ENCODE measurements at regions of chr2 and their contacts with region 1.

Region 1: GRCh38 chr2:176454893-176455811 is 185.9 kb downstream of the MTX2 start:
- DNase-seq: peak; percentile 67 to 98
- H3K4me3 ChIP-seq: no peak overlapping the region
- H3K27ac ChIP-seq: no peak overlapping the region
- H3K4me1 ChIP-seq: peaks cover 0 to 14% (median 7%) of the 10 kb centered on the region in 4 experiments; a peak in 5 of 7 replicates
- H3K27me3 ChIP-seq: no peaks in the 10 kb centered on the region
- CTCF ChIP-seq: peak; percentile 57 to 82 (median 79)
- EP300 ChIP-seq: no peak
- POLR2A ChIP-seq: no peak
- RAD21 ChIP-seq: peak; percentile 91 to 94

Region 2: GRCh38 chr2:176167398-176167797 is 287.8 kb before region 1 on chr2:
- CTCF ChIA-PET with region 1: interaction called, 11 read pairs
- POLR2A ChIA-PET with region 1: no interaction called
- DNase-seq: no peak
- H3K4me3 ChIP-seq: no peak overlapping the region
- H3K27ac ChIP-seq: no peak overlapping the region
- H3K4me1 ChIP-seq: peaks cover 0 to 15% (median 9%) of the 10 kb centered on the region in 4 experiments; a peak in 5 of 7 replicates
- H3K27me3 ChIP-seq: peaks cover 96 to 100% (median 100%) of the 10 kb centered on the region in 4 experiments
- CTCF ChIP-seq: no peak
- EP300 ChIP-seq: no peak
- POLR2A ChIP-seq: no peak
- RAD21 ChIP-seq: no peak

Region 3: GRCh38 chr2:176473177-176473576 is 18.0 kb after region 1 on chr2:
- CTCF ChIA-PET with region 1: interaction called, 14 read pairs
- POLR2A ChIA-PET with region 1: no interaction called
- DNase-seq: no peak
- H3K4me3 ChIP-seq: no peak overlapping the region
- H3K27ac ChIP-seq: no peak overlapping the region
- H3K4me1 ChIP-seq: no peaks in the 10 kb centered on the region
- H3K27me3 ChIP-seq: no peaks in the 10 kb centered on the region; a peak in 1 of 7 replicates
- CTCF ChIP-seq: no peak
- EP300 ChIP-seq: no peak
- POLR2A ChIP-seq: no peak
- RAD21 ChIP-seq: no peak

Region 4: DNA sequence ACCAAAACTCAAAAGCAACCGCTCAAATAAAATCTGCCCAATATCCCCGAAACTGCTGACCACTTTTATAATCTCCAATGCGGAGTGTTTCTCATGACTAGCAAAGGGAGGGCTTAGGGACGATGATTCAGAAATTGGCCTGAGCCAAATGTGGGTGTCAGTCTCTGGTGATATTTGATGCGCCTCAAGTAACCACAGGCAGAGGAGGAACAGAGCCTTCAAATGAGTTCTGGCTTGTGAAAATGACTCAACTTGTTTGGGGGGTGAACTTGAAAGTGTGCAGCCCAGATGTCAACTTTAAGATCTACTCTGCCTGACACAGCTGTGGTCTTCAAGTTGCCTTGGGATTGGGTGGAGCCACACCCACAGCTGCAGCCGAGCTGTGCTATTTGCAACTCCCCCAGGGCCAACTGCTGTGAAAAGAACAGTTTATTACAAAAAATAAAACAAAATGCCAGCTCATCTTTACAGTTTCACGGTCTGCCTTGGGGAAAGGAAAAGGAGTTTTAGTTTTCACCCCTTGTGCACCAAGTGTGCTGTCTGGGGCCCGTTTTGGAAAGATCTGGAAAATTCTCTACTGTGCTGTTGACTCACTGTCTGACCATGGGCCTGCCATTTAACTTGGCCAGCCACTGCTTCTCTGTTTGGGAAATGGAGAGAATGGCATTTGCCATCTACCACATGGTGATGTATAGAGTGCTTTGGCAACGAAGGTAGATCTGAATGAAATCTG is 36.2 kb after region 1 on chr2:
- CTCF ChIA-PET with region 1: interaction called, 14 read pairs
- POLR2A ChIA-PET with region 1: no interaction called
- DNase-seq: no peak
- H3K4me3 ChIP-seq: peak overlapping the region in 1 of 4 experiments; percentile 51; a peak in 1 of 8 replicates
- H3K27ac ChIP-seq: no peak overlapping the region
- H3K4me1 ChIP-seq: peaks cover 0 to 19% (median 11%) of the 10 kb centered on the region in 4 experiments
- H3K27me3 ChIP-seq: peaks cover 0 to 15% (median 7%) of the 10 kb centered on the region in 4 experiments; a peak in 5 of 7 replicates
- CTCF ChIP-seq: no peak
- EP300 ChIP-seq: no peak
- POLR2A ChIP-seq: no peak
- RAD21 ChIP-seq: no peak

Region 5: GRCh38 chr2:176554101-176555048 is 99.2 kb after region 1 on chr2:
- CTCF ChIA-PET with region 1: interaction called, 30 read pairs
- POLR2A ChIA-PET with region 1: no interaction called
- DNase-seq: peak in 1 of 2 experiments; percentile 55
- H3K4me3 ChIP-seq: peak overlapping the region in 3 of 4 experiments; percentile 20 to 51 (median 43); a peak in 5 of 8 replicates
- H3K27ac ChIP-seq: no peak overlapping the region
- H3K4me1 ChIP-seq: no peaks in the 10 kb centered on the region; a peak in 2 of 7 replicates
- H3K27me3 ChIP-seq: peaks cover 0 to 11% (median 8%) of the 10 kb centered on the region in 4 experiments; a peak in 6 of 7 replicates
- CTCF ChIP-seq: peak; percentile 13 to 64 (median 62)
- EP300 ChIP-seq: no peak
- POLR2A ChIP-seq: no peak
- RAD21 ChIP-seq: peak; percentile 75 to 84

Measured in H1 (cell line).